ENCODE measurements at regions of chr6 and their contacts with region 1.

Region 1: DNA sequence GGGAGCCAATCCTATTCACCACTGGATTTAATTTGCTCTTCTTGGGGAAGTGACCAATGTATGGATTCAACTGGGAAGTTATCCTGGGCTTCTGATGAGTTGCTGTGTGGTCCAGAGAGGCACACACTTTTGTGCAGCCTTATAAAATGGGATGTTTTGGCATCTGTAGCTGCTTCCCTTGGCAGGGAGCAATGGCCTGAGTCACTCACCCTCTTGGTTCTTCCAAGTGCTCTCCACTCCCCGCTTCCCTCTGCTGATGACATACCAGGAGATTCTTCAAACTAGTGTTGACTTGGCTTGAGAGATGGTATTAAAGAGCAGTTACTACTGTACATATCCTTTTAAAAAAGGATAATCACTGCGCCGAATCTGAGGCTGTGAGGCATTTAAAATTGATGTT is 105.8 kb downstream of the JARID2 start:
- DNase-seq: peak; percentile 79
- ATAC-seq: peak; percentile 96
- H3K4me3 ChIP-seq: no peak overlapping the region
- H3K27ac ChIP-seq: peak overlapping the region; percentile 22; the same call in 1 of the 2 replicates
- H3K4me1 ChIP-seq: peaks cover 33% of the 10 kb centered on the region
- H3K27me3 ChIP-seq: no peaks in the 10 kb centered on the region
- CTCF ChIP-seq: no peak

Region 2: GRCh38 chr6:15086348-15087196 is 265.1 kb before region 1 on chr6:
- CTCF ChIA-PET with region 1: no interaction called
- POLR2A ChIA-PET with region 1: no interaction called
- intact Hi-C with region 1: no loop called
- DNase-seq: no peak
- ATAC-seq: no peak
- H3K4me3 ChIP-seq: no peak overlapping the region
- H3K27ac ChIP-seq: no peak overlapping the region
- H3K4me1 ChIP-seq: peaks cover 13% of the 10 kb centered on the region; the same call in 1 of the 2 replicates
- H3K27me3 ChIP-seq: no peaks in the 10 kb centered on the region
- CTCF ChIP-seq: no peak

Region 3: DNA sequence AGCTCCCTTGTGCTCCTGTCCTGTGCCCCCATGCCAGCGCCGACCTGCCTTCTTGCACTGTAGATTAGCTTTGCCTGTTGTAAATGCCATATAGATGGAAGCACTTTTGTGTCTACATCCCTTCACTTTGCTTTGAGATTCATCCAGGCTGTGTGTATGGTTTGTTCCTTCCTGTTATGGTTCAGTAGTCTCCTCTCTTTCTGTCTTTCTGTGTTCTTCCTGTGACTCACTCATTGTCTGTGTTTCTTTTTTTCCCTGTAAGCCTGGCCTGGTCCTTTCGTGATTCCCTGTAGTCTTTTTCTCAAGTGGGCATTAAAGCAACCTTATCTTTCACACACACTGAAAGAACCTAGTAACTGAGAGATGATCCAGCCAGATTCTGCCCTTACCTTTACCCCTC is 39.1 kb before region 1 on chr6:
- CTCF ChIA-PET with region 1: no interaction called
- POLR2A ChIA-PET with region 1: interaction called, 4 read pairs
- intact Hi-C with region 1: loop called (anchors 5 kb)
- DNase-seq: peak; percentile 42
- ATAC-seq: peak; percentile 93
- H3K4me3 ChIP-seq: no peak overlapping the region
- H3K27ac ChIP-seq: no peak overlapping the region
- H3K4me1 ChIP-seq: peaks cover 17% of the 10 kb centered on the region
- H3K27me3 ChIP-seq: no peaks in the 10 kb centered on the region
- CTCF ChIP-seq: no peak